ENCODE measurements at regions of chr14 and their contacts with region 1.

Region 1: DNA sequence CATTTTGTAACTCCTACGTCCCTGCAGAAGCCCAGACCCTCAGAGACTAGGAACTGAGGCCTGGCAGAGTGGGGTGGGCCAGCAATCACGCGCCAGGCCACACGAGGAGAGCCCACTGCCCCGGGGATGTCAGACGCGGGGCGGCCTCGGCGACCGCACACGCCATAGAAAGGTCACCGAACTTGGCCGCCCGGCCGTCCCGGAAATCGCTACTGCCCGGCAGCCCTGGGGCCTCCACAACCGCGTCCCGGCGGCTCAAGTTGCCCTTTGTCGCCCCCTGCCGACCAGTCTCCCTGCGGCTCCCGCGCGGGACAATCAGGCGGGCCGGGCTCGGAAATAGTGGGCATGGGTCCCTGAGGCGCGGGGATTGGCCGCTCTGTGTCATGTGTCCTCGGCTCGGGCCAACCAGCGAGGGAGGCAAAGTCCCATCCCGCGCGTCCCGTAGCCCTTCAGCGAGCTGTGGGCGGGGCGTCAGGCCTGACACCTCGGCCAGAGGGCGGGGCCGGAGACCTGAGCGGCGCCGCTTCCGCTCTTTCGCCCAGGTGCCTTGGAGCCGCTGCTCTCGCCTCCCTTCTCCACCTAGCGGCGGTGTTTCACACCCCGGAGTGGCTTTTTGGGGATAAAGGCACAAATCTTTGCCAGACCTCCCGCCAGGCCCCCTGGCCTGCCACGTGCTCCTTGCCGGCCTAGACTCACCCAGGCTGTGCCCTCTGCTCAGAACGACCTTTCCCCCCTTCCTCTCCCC is 33.4 kb upstream of the DEGS2 start:
- DNase-seq: peak; percentile 99 to 100
- H3K4me3 ChIP-seq: peak overlapping the region; percentile 39 to 67 (median 51)
- H3K27ac ChIP-seq: peak overlapping the region; percentile 96 to 98
- H3K4me1 ChIP-seq: peaks cover 4 to 6% of the 10 kb centered on the region in 2 donors
- H3K27me3 ChIP-seq: no peaks in the 10 kb centered on the region
- CTCF ChIP-seq: peak; percentile 82 to 96 (median 91)
- POLR2A ChIP-seq: peak; percentile 42

Region 2: GRCh38 chr14:99995700-99996356 is 197.0 kb before region 1 on chr14:
- intact Hi-C with region 1: loop called (anchors 10 kb)
- DNase-seq: peak in 1 of 2 donors; percentile 58
- H3K4me3 ChIP-seq: no peak overlapping the region
- H3K27ac ChIP-seq: no peak overlapping the region
- H3K4me1 ChIP-seq: no peaks in the 10 kb centered on the region
- H3K27me3 ChIP-seq: no peaks in the 10 kb centered on the region
- CTCF ChIP-seq: peak; percentile 49 to 67 (median 60)
- POLR2A ChIP-seq: no peak

Region 3: DNA sequence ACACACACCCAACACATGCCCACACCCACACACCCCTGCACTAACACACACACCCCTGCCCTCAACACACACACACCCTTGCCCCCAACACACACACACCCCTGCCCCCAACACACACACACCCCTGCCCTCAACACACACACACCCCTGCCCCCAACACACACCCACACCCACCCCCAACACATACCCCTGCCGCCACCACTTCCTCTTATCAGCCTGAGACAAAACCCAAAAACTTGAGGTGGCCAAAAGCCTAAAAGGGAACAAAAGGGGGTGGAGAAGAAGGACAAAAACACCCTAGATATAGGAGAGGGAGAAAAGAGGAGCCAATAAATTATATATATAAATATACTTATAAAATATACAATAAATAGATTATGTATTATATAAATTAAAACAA is 24.3 kb before region 1 on chr14:
- intact Hi-C with region 1: loop called (anchors 1 kb)
- DNase-seq: no peak
- H3K4me3 ChIP-seq: no peak overlapping the region
- H3K27ac ChIP-seq: no peak overlapping the region
- H3K4me1 ChIP-seq: no peaks in the 10 kb centered on the region
- H3K27me3 ChIP-seq: no peaks in the 10 kb centered on the region
- CTCF ChIP-seq: no peak
- POLR2A ChIP-seq: no peak

Measured in breast epithelium (tissue), 4 donors.